Activated CD4-positive, alpha-beta T cell treated with anti-CD3 and anti-CD28 coated beads for 36 hours (primary cell): ENCODE measurements at regions of chr4 and their contacts with region 1.

Region 1: DNA sequence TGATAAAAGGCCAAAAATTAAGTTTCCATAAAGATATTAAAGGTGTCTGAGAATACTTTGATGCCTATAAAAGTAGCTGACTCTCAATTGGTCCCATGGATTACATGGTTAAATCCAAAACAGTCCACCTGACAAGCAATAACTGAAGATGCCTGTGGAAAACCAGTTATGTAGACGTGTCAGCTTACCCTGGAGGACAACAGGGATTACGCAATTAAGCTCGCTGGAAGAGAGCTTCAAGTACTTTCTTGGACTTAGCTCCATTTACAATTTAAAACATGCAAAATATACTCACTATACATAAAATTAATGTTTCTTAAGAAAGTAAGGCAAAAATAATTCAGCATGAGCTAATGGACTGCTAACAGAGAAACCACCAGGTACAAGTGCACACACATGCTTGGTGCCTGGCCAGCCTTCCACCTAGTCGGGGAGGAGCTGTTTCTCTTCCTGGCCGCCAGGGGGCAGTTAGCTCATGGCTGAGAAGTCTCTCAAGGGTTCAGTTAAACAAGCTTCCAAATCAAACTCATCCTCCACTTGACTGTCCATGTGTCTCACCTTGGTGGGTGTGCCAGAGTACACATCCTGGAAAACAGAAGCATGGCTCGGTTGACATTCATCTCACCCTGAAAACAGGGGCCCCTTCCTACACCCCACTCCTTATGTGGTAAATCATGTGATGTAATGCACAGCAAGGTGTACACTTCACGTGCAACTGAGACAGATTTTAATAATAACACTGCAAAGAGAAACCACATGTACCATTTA is 9.2 kb upstream of the FAM53A start:
- DNase-seq: peak; percentile 88
- ATAC-seq: peak; percentile 96
- H3K4me3 Mint-ChIP-seq: no peak overlapping the region
- H3K27ac Mint-ChIP-seq: peak overlapping the region; percentile 70
- H3K4me1 Mint-ChIP-seq: peaks cover 4% of the 10 kb centered on the region
- H3K27me3 Mint-ChIP-seq: no peaks in the 10 kb centered on the region

Region 2: DNA sequence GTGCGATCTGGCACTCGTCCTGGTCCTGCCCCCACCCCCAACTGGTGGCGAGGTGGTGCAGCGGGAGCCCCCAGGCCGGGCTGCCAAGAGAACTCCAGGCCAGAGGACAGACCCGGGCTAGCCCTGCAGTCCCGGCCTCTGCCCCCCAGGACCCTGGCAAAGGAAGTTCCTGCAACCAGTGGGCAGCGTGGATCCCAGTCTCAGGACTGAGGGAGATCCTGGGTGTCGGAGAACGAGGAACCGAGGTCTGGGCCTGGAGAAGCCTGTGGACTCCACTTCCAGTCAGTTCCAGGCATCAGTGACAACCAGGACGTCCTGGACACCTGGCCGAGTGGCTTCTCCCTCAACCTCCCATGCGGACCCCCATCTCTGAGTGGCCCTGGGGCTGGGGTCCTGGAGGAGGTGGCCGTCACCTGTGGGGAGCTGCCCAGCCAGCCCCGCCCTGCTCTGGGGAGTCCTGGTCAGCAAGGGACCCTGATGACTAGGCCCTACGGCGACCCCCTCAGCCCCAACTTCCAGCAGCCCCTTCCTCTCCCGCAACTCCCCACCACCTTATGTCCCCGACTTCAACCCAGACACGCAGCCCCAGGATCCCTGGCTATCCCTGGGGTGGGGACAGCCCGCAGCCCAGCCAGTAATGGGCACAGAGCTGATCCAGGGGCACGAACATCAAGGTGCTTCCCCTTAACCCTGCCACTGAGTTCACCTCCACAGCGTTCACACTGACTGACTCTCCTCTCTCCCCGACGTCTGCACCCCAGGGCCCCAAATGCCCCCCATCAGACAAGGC is 233.4 kb before region 1 on chr4:
- CTCF ChIA-PET with region 1: no interaction called
- POLR2A ChIA-PET with region 1: no interaction called
- intact Hi-C with region 1: no loop called
- DNase-seq: no peak
- ATAC-seq: no peak
- H3K4me3 Mint-ChIP-seq: no peak overlapping the region
- H3K27ac Mint-ChIP-seq: no peak overlapping the region
- H3K4me1 Mint-ChIP-seq: no peaks in the 10 kb centered on the region
- H3K27me3 Mint-ChIP-seq: peaks cover 22% of the 10 kb centered on the region

Region 3: DNA sequence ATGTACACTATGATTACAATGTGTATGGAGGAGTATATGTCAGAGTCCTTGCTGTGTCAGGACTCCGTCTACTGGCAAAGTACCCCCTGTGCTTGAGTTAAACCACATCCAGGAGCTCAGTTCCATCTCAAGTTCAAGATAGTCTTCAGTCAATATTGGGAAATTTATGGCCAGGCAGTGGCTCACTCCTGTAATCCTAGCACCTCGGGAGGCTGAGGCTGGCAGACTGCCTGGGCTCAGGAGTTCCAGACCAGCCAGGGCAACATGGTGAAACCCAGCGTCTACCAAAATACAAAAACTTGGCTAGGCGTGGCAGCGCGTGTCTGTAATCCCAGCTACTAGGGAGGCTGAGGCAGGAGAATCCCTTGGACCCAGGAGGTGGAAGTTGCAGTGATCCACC is 13.0 kb after region 1 on chr4:
- CTCF ChIA-PET with region 1: interaction called, 122 read pairs
- POLR2A ChIA-PET with region 1: interaction called, 28 read pairs
- intact Hi-C with region 1: loop called in 1 of 2 experiments (anchors 2 kb)
- DNase-seq: no peak
- ATAC-seq: no peak
- H3K4me3 Mint-ChIP-seq: no peak overlapping the region
- H3K27ac Mint-ChIP-seq: no peak overlapping the region
- H3K4me1 Mint-ChIP-seq: peaks cover 77% of the 10 kb centered on the region
- H3K27me3 Mint-ChIP-seq: no peaks in the 10 kb centered on the region

Region 4: DNA sequence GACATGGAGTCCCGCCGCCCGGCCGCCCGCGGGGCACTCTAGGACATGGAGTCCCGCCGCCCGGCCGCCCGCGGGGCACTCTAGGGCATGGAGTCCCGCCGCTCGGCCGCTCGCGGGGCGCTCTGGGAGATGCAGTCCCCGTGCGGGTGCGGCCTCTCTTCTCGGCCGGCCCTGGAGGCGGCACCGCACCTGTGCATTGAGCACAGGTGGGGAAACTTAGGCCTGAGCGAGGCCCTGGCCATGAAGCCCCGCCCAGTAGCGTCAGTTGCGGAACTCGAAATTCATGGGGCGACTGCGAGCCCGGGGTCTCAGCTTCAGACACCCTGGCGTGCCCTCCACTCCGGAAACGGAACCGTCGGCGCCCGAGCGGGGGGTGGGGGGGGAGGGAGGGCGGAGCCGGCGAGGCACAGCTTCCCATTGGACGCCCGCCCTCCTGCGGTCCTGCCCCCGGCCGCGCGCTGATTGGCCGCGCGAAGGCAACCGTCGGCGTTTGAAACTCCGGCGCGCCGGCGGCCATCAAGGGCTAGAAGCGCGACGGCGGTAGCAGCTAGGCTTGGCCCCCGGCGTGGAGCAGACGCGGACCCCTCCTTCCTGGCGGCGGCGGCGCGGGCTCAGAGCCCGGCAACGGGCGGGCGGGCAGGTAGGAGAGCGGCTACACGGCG is 27.8 kb after region 1 on chr4 and contains the starts of genes TACC3 and TMEM129:
- CTCF ChIA-PET with region 1: interaction called, 196 read pairs
- POLR2A ChIA-PET with region 1: interaction called, 17 read pairs
- intact Hi-C with region 1: loop called (anchors 1 kb)
- DNase-seq: peak; percentile 96
- ATAC-seq: peak; percentile 81
- H3K4me3 Mint-ChIP-seq: peak within 1 kb of the TSS; percentile 96
- H3K27ac Mint-ChIP-seq: peak within 1 kb of the TSS; percentile 99
- H3K4me1 Mint-ChIP-seq: peaks cover 52% of the 10 kb centered on the region
- H3K27me3 Mint-ChIP-seq: no peaks in the 10 kb centered on the region
- total RNA-seq, gene TACC3: 197 to 206 TPM
- total RNA-seq, gene TMEM129: 13.7 to 14.6 TPM

Region 5: DNA sequence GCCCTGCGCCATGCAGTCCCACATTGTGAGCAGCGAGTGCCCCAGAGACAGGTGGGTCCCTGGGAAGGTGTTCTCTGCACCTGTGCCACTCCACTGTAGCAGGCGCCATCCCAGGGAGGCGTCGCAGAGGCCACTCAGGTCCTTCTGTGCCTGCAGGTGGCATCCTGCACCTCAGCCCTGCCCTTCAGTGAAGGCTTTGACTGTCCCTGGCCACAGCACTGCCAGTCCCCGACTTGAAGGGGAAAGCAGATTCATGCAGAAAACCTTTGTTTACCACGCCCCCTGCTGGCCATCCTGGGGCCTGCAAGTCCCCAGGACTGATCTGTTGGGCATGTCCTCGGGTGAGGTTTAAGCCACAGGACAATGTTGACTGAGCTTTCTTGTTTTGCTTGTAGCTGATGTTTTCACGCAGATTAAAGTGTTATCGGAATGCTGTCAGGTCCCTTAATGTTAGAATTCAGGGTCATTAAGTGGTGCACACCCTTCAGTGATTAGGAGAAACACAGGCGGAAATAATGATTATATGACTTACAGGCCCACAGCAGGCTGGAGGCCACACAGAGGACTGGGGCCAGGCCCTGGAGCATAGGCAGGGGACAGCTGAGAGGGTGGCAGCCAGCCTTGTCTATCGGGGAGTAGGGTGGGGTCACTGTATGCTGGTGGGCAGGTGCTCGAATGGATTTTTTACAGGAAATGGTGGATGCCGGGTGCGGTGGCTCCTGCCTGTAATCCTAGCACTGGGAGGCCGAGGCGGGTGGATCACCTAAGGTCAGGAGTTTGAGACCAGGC is 33.0 kb after region 1 on chr4:
- CTCF ChIA-PET with region 1: interaction called, 196 read pairs
- POLR2A ChIA-PET with region 1: interaction called, 17 read pairs
- intact Hi-C with region 1: loop called (anchors 1 kb)
- DNase-seq: peak; percentile 93
- ATAC-seq: peak; percentile 10
- H3K4me3 Mint-ChIP-seq: no peak overlapping the region
- H3K27ac Mint-ChIP-seq: peak overlapping the region; percentile 69
- H3K4me1 Mint-ChIP-seq: peaks cover 76% of the 10 kb centered on the region
- H3K27me3 Mint-ChIP-seq: no peaks in the 10 kb centered on the region

Region 6: DNA sequence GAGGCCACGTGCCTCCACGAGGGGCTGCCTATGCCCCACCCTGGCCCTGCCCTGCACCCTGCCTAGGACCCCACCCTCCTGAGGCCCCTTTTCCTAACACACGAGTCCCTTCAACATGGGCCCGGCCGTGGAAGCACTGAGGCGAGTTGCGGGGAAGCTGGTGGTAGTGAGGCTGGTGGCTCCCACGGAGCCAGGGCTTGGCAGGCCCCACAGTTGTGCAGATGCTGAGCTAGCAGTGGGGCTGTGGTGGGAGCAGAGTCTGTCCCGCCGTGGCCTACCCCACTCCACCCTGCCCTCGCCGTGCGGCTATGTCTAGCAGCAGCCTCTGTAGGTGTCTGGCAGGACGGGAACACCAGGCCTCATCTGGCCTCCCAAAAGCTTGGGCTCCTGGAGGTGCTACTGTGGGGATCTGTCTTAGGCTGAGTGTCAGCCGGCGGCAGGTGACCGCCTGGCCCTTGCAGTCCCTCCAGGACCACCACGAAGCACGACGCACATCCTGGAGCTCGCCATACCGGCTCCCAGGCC is 46.8 kb after region 1 on chr4:
- CTCF ChIA-PET with region 1: interaction called, 11 read pairs
- POLR2A ChIA-PET with region 1: no interaction called
- intact Hi-C with region 1: no loop called
- DNase-seq: no peak
- ATAC-seq: no peak
- H3K4me3 Mint-ChIP-seq: no peak overlapping the region
- H3K27ac Mint-ChIP-seq: no peak overlapping the region
- H3K4me1 Mint-ChIP-seq: no peaks in the 10 kb centered on the region
- H3K27me3 Mint-ChIP-seq: no peaks in the 10 kb centered on the region

Region 7: GRCh38 chr4:1960170-1960825 is 267.0 kb after region 1 on chr4:
- CTCF ChIA-PET with region 1: no interaction called
- POLR2A ChIA-PET with region 1: no interaction called
- intact Hi-C with region 1: no loop called
- DNase-seq: no peak
- ATAC-seq: no peak
- H3K4me3 Mint-ChIP-seq: no peak overlapping the region
- H3K27ac Mint-ChIP-seq: no peak overlapping the region
- H3K4me1 Mint-ChIP-seq: peaks cover 2% of the 10 kb centered on the region
- H3K27me3 Mint-ChIP-seq: no peaks in the 10 kb centered on the region